ENCODE measurements at regions of chr12 and their contacts with region 1.

Region 1: DNA sequence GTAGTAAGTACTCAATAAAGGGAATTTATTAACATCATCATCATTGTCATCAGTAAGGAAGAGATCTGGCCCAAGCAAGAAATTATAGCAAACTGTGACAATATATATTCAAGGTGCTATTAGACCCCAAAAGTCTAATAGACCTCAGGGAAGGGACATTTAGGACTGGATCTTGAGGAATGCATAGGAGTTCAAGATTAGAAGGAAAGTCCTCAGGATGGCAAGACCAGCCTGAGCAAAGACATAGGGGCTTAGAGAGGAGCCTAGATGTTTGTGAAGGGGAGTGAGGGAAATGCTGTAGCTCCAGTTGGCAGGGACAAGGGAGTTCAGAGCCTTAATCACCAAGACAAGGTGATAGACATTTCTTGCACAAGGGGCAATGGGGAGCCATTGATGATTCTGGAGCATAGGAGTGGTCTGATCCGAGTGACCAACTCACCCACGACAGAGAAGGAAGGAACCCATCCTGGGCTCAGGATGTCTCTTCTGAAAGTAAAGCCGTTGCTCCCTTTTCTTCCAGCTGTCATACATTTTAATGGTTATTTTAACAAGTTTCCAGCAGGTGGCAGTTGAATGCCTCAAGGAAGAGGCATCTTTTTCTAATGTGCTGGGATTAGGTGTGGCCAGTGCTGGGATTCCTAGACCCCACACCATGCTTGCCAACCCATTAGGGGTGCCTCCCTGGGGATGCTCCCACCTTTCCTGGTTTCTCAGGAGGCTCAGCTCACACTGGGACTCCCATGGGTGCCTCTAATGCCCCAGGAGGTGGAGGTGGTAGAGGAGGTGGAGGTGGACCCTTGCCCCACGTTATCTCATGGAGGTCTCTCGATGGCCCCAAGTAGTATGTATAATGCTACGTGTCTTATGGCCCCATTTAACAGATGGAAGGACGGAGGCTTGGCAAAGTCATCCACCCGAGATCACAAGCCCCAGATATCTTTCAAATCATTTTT is 37.8 kb downstream of the PHETA1 start:
- DNase-seq: no peak
- H3K4me3 Mint-ChIP-seq: no peak overlapping the region
- H3K27ac Mint-ChIP-seq: no peak overlapping the region
- H3K4me1 Mint-ChIP-seq: peaks cover 3% of the 10 kb centered on the region
- H3K27me3 Mint-ChIP-seq: no peaks in the 10 kb centered on the region

Region 2: DNA sequence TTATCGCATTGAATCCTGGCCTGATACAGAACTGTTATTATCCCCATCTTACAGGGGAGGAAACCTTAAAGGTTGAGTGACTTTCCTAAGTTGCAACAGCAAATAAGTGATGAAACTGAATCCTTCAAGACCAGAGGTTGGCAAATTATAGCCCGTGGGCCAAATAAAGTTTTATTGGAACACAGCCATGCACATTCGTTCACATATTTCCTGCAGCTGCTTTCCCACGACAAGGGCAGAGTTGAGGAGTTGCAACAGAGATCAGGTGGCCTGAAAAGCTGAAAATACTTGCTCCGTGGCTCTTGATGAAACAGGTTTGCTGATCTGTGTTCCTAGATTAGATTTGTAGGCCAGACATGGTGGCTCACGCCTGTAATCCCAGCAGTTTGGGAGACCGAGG is 88.9 kb before region 1 on chr12:
- CTCF ChIA-PET with region 1: no interaction called
- intact Hi-C with region 1: no loop called
- DNase-seq: no peak
- H3K4me3 Mint-ChIP-seq: no peak overlapping the region
- H3K27ac Mint-ChIP-seq: no peak overlapping the region
- H3K4me1 Mint-ChIP-seq: no peaks in the 10 kb centered on the region
- H3K27me3 Mint-ChIP-seq: no peaks in the 10 kb centered on the region

Region 3: GRCh38 chr12:111482462-111482861 is 151.4 kb after region 1 on chr12:
- CTCF ChIA-PET with region 1: interaction called, 3 read pairs
- intact Hi-C with region 1: loop called (anchors 1 kb)
- DNase-seq: no peak
- H3K4me3 Mint-ChIP-seq: no peak overlapping the region
- H3K27ac Mint-ChIP-seq: no peak overlapping the region
- H3K4me1 Mint-ChIP-seq: no peaks in the 10 kb centered on the region
- H3K27me3 Mint-ChIP-seq: no peaks in the 10 kb centered on the region